Activated CD4-positive, alpha-beta T cell treated with anti-CD3 and anti-CD28 coated beads, Interleukin-2, amount 10 ng/mL, durations not matched to agents 24 days and 14 days (primary cell): ENCODE measurements at regions of chr2 and their contacts with region 1.

Region 1: DNA sequence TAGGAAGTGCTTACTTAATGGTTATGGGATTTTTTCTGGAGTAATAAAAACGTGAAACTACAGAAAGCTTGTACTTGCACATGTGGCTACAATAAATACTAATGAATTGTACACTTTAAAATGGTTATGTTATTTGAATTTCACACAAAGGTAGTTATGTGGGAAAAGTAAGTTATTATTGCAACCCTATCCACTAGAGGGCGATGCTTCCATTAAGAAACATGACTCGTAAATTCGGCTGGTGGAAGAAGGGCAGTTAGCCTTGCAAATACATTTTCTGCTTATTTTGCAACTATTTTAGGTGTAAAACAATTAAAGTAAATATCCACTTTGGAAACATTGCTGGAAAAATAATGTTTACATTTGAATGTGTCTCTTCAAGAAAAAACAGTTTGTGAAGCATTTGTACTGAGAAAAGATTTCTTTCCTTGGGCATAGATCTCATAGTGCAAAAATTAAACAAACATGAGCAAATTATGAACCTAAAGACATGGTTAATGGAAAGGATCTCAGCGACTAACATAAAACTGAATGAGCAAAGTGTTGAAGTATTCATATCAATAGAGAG is 68.1 kb upstream of the CSRNP3 start:
- DNase-seq: peak; percentile 72
- H3K4me3 Mint-ChIP-seq: no peak overlapping the region
- H3K27ac Mint-ChIP-seq: no peak overlapping the region
- H3K4me1 Mint-ChIP-seq: peaks cover 5% of the 10 kb centered on the region
- H3K27me3 Mint-ChIP-seq: peaks cover 18% of the 10 kb centered on the region

Region 2: DNA sequence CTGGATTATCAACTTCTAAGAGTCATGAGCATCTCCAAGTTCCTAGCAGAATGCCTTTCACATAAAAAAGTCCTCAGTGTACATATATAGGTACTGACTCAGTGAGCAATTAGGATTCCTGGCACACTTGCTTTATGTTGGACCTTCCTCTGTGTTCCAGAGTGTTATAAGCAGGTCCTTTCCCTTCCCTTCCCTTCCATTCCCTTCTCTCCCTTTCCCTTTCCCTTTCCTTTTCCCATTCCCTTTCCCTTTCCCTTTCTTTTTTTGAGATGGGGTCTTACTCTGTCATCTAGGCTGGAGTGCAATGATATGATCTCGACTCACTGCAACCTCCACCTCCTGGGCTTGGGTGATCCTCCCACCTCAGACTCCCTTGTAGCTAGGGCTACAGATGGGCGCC is 246.2 kb before region 1 on chr2:
- intact Hi-C with region 1: no loop called
- DNase-seq: no peak
- H3K4me3 Mint-ChIP-seq: no peak overlapping the region
- H3K27ac Mint-ChIP-seq: no peak overlapping the region
- H3K4me1 Mint-ChIP-seq: no peaks in the 10 kb centered on the region
- H3K27me3 Mint-ChIP-seq: no peaks in the 10 kb centered on the region

Region 3: DNA sequence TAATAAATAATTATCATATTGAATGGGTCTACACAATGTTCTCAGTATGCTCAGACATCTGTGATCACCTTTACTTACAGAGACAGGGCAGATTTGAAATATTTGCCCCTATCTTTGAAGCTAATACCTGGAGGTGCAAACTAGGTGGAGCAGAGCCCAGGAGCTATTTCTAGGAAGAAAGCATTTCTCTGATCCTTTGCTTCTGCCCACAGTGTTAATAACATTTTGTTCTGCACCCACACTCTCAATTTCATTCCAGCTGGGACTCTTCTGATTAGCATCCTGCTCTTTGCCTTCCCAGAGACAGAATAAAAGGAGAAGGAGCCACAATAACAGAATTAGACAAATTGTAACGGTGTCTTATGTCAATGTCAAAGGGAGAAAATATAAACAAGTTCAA is 173.8 kb before region 1 on chr2:
- intact Hi-C with region 1: no loop called
- DNase-seq: no peak
- H3K4me3 Mint-ChIP-seq: no peak overlapping the region
- H3K27ac Mint-ChIP-seq: no peak overlapping the region
- H3K4me1 Mint-ChIP-seq: no peaks in the 10 kb centered on the region
- H3K27me3 Mint-ChIP-seq: no peaks in the 10 kb centered on the region

Region 4: DNA sequence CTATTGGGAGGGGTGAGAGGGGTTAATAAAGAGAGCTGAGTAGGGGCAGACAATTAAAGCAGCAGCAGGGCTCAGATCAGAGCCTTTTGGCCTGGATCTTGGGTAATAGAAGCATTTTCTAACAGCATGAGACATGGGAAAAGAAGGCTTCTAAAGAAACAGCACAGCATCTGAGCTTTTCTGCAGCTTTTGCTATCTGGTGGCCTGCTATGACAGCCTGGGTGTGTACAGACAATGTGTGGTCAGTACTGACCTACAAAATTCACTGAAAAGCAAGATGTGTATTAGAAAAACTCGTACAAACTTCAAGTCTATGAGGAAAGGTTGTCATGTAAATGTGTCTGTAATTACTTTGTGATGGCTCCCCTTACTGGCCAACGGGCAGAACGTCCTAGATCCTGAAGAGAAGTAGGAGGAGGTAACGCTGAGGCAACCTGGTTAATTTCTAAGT is 297.1 kb after region 1 on chr2:
- intact Hi-C with region 1: loop called (anchors 10 kb)
- DNase-seq: peak; percentile 56
- H3K4me3 Mint-ChIP-seq: no peak overlapping the region
- H3K27ac Mint-ChIP-seq: no peak overlapping the region
- H3K4me1 Mint-ChIP-seq: no peaks in the 10 kb centered on the region
- H3K27me3 Mint-ChIP-seq: peaks cover 12% of the 10 kb centered on the region

Region 5: GRCh38 chr2:165778653-165779451 is 377.5 kb after region 1 on chr2:
- intact Hi-C with region 1: loop called (anchors 5 kb)
- DNase-seq: peak; percentile 65
- H3K4me3 Mint-ChIP-seq: no peak overlapping the region
- H3K27ac Mint-ChIP-seq: no peak overlapping the region
- H3K4me1 Mint-ChIP-seq: peaks cover 15% of the 10 kb centered on the region
- H3K27me3 Mint-ChIP-seq: no peaks in the 10 kb centered on the region